Calu3 (cell line): ENCODE measurements at regions of chr9 and their contacts with region 1.

Region 1: DNA sequence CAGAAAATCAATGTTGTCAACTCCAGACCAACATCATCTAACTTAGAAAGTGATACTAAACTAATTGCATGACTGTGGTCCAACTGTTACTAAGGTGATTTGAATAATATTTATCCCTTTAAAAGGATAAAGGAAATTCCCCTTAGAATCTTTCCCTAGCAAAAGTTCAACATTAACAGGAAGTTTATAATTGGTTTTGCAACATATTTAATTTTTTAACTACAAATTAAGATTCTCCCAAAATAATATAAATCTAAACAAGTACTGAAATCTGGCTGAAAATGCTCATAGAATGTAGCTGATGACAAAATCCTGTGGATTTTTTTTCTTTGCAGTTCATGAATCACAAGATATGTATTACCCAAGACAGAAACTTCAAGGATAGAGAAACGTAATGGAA is 151.4 kb downstream of the LPAR1 start:
- DNase-seq: no peak
- H3K4me3 Mint-ChIP-seq: no peak overlapping the region
- H3K27ac Mint-ChIP-seq: no peak overlapping the region
- H3K4me1 Mint-ChIP-seq: peaks cover 14% of the 10 kb centered on the region
- H3K27me3 Mint-ChIP-seq: no peaks in the 10 kb centered on the region
- CTCF ChIP-seq: no peak

Region 2: GRCh38 chr9:110847671-110848070 is 39.2 kb before region 1 on chr9:
- CTCF ChIA-PET with region 1: no interaction called
- intact Hi-C with region 1: loop called (anchors 5 kb)
- DNase-seq: no peak
- H3K4me3 Mint-ChIP-seq: no peak overlapping the region
- H3K27ac Mint-ChIP-seq: no peak overlapping the region
- H3K4me1 Mint-ChIP-seq: no peaks in the 10 kb centered on the region
- H3K27me3 Mint-ChIP-seq: no peaks in the 10 kb centered on the region
- CTCF ChIP-seq: no peak